Esophagus squamous epithelium (tissue), 5 donors: ENCODE measurements at regions of chr7 and their contacts with region 1.

Region 1: GRCh38 chr7:100469227-100470044 is 5.4 kb upstream of the SPACDR start:
- DNase-seq: no peak
- H3K4me3 ChIP-seq: no peak overlapping the region
- H3K27ac ChIP-seq: peak overlapping the region in 2 of 4 donors; percentile 42 to 45
- H3K4me1 ChIP-seq: peaks cover 30 to 82% (median 36%) of the 10 kb centered on the region in 3 donors
- H3K27me3 ChIP-seq: no peaks in the 10 kb centered on the region
- CTCF ChIP-seq: peak; percentile 84 to 99 (median 96)
- POLR2A ChIP-seq: no peak

Region 2: GRCh38 chr7:100563809-100564400 is 94.5 kb after region 1 on chr7:
- intact Hi-C with region 1: loop called (anchors 1 kb)
- DNase-seq: no peak
- H3K4me3 ChIP-seq: no peak overlapping the region
- H3K27ac ChIP-seq: no peak overlapping the region
- H3K4me1 ChIP-seq: peaks cover 9 to 55% (median 9%) of the 10 kb centered on the region in 3 donors
- H3K27me3 ChIP-seq: no peaks in the 10 kb centered on the region
- CTCF ChIP-seq: peak; percentile 88 to 98 (median 96)
- POLR2A ChIP-seq: no peak